Caco-2 (cell line): ENCODE measurements at regions of chr1 and their contacts with region 1.

Region 1: GRCh38 chr1:23273450-23274133 is 56.3 kb upstream of the HTR1D start:
- DNase-seq: no peak
- H3K4me3 ChIP-seq: no peak overlapping the region
- H3K4me3 Mint-ChIP-seq: no peak overlapping the region
- H3K27ac Mint-ChIP-seq: no peak overlapping the region
- H3K4me1 ChIP-seq: no peaks in the 10 kb centered on the region
- H3K4me1 Mint-ChIP-seq: peaks cover under 1% of the 10 kb centered on the region
- H3K27me3 ChIP-seq: no peaks in the 10 kb centered on the region
- H3K27me3 Mint-ChIP-seq: no peaks in the 10 kb centered on the region
- CTCF ChIP-seq: no peak

Region 2: DNA sequence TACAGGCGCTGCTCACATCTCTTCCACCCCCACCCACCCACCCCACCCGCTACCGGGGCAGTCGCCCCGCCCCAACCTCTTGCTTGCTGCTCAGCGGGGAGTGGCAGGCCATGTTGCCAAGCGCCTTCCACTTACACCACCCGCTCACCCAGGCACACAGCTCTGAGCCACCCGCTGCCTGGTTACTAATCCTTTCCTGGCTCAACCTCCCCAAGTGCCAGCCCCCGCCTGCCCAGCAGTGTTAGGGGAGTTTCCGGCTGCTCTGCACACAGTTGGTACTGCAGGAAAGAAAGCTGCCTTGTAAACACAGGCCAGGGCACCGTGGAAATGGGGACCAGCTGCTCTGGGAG is 357.1 kb before region 1 on chr1:
- CTCF ChIA-PET with region 1: no interaction called
- POLR2A ChIA-PET with region 1: no interaction called
- intact Hi-C with region 1: no loop called
- DNase-seq: no peak
- H3K4me3 ChIP-seq: no peak overlapping the region
- H3K4me3 Mint-ChIP-seq: no peak overlapping the region
- H3K27ac Mint-ChIP-seq: no peak overlapping the region
- H3K4me1 ChIP-seq: no peaks in the 10 kb centered on the region
- H3K4me1 Mint-ChIP-seq: no peaks in the 10 kb centered on the region
- H3K27me3 ChIP-seq: no peaks in the 10 kb centered on the region
- H3K27me3 Mint-ChIP-seq: no peaks in the 10 kb centered on the region
- CTCF ChIP-seq: no peak

Region 3: DNA sequence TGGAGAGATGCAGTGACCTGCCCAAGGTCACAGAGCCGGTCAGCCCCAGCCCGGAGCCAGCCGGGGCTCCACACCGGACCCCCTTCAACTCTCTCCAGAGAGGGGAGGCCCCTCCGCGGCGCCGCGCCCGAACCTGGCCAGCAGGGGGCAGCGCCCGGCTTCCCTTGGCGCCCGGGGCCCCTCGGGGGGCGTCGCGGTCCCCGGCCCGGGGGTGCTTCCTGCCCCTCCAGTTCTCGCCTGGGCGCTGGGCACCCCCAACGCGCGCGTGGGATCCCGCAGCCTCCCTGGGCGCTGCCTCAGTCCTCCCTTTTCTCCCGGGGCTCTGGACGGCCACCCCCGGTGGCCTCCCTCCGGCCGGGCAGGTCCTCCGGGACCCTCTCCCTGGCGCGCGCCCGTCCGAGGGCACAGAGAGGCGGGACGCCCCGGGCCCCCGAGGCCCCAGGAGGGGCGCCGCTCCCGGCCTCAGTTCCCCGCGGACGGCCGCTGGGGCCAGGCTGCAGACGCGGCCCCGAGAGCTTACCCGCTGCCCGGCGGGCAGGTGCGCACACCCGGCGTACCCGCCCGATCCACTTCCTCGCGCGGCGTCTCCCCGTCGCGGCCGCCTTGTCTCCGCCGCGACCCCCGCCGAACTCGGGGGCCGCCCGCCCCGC is 56.7 kb before region 1 on chr1:
- CTCF ChIA-PET with region 1: no interaction called
- POLR2A ChIA-PET with region 1: no interaction called
- intact Hi-C with region 1: loop called (anchors 5 kb)
- DNase-seq: peak in 1 of 2 experiments; percentile 63
- H3K4me3 ChIP-seq: peak overlapping the region; percentile 71
- H3K4me3 Mint-ChIP-seq: peak overlapping the region; percentile 68
- H3K27ac Mint-ChIP-seq: no peak overlapping the region
- H3K4me1 ChIP-seq: peaks cover 4% of the 10 kb centered on the region
- H3K4me1 Mint-ChIP-seq: peaks cover 6% of the 10 kb centered on the region
- H3K27me3 ChIP-seq: no peaks in the 10 kb centered on the region
- H3K27me3 Mint-ChIP-seq: no peaks in the 10 kb centered on the region
- CTCF ChIP-seq: peak; percentile 60 to 80